ENCODE measurements at regions of chr3 and their contacts with region 1.

Region 1: DNA sequence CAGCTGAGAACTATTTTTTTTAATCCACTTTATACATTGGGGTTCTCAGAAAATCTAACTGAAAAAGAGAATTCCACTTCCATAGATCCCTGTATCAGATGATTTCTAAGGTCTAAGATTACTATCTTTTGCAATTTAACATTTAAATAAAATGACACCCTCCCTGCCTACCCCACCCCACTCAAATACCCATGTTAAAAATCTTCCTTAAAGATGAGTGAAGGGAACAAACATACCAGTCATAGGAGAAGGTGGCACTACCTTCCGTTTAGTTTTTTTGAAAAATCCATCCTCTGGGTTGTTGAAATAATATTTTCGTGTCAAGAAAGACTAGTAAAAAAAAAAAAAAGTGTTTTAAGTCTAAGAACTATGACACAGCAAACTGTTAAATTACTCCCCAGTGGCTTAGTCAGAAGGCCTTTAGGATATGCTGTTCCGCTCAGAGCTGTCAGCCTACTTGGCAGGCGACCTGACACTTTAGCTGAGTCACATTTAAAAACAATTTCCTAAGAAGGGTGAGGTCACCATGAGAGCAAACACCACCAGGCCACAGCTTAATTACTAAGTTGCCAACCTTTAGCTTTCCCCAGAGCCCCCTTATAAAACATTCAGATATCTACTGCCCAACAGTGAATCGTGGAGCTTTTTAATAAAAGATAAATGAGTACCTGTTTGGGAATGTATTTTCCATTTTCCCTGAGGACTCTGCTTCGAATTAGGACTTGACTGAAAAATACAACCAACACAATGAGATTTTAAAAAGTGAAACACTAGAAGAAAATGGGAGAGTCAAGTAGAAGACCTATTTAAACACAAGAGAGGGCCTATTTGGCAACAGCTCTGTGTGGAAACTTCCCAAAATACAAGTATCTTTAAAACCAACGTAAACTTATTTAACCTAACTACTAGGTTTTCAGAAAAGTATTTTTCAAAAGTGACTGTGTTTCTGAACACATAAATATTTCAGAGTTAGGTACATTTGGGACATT is 9.6 kb downstream of the EMC3 start:
- DNase-seq: no peak
- CTCF ChIP-seq: no peak

Region 2: DNA sequence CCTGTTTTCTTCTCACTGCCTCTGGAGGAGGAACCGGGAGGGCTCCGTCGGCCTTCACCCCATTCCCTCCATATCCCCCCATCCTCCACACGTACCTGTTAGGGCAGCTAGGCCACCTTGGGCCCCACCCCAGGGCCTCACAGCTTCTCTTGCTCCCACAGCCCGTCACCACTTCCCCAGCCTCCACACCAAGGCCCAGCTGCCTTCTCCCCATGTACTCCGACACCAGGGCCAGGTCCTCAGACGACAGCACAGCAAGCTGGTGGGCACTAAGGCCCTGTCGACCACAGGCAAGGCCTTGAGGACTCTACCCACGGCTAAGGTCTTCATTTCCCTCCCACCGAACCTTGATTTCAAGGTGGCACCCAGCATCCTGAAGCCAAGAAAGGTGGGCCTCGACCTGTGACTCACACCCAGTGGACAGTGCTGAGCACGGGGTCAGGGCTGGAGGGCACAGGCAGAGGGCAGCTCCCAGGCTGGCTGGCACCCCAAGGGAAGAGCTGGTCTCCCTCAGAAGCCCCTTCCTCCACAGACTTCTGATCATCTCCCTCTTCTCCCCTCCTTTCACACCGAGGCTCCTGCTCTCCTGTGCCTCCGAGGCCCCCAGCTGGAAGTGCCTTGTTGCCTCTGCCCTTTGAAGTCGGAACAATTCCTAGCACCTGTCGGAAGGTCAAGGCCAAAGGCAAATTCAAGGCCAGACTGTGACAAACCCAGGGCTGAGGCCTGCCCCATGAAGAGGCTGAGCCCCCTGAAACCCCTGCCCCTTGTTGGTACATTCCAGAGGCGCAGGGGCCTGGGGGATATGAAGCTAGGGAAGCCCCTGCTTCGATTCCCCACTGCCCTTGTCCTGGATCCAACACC is 142.3 kb before region 1 on chr3:
- CTCF ChIA-PET with region 1: no interaction called
- POLR2A ChIA-PET with region 1: interaction called, 10 read pairs
- DNase-seq: no peak
- CTCF ChIP-seq: no peak

Region 3: DNA sequence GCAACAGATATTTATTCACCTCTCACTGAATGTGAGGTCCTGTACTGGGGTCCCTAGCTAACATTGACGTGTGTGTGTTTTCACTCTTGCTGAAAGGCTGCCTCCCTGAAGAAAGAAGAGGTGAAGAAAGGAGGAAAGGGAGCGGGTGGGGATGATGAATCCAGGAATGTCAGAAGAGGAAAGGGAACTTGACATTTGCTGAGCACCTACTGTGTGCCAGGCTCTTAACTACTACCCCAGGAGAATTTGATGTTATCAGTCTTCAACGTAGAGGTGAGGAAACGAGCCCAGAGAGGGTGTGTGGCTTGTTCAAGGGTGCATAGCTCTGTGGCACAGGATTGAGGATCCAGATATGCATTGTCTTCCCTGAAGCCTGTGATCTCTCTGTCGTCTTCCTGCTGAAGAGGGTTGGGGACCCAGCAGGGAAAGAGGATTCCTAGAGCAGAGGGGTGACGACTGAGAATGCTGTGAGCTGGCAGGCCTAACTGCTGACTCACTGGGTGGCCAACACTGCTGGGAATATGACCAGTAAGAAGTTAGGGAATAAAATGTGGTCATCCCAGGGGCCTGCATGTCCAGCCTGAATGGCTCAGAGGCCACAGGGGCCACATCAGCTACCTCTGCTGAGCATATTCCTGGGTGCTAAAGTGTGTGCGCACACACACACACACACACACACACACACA is 534.9 kb after region 1 on chr3:
- CTCF ChIA-PET with region 1: no interaction called
- POLR2A ChIA-PET with region 1: no interaction called
- DNase-seq: no peak
- CTCF ChIP-seq: no peak